ENCODE measurements at regions of chr11 and their contacts with region 1.

Region 1: DNA sequence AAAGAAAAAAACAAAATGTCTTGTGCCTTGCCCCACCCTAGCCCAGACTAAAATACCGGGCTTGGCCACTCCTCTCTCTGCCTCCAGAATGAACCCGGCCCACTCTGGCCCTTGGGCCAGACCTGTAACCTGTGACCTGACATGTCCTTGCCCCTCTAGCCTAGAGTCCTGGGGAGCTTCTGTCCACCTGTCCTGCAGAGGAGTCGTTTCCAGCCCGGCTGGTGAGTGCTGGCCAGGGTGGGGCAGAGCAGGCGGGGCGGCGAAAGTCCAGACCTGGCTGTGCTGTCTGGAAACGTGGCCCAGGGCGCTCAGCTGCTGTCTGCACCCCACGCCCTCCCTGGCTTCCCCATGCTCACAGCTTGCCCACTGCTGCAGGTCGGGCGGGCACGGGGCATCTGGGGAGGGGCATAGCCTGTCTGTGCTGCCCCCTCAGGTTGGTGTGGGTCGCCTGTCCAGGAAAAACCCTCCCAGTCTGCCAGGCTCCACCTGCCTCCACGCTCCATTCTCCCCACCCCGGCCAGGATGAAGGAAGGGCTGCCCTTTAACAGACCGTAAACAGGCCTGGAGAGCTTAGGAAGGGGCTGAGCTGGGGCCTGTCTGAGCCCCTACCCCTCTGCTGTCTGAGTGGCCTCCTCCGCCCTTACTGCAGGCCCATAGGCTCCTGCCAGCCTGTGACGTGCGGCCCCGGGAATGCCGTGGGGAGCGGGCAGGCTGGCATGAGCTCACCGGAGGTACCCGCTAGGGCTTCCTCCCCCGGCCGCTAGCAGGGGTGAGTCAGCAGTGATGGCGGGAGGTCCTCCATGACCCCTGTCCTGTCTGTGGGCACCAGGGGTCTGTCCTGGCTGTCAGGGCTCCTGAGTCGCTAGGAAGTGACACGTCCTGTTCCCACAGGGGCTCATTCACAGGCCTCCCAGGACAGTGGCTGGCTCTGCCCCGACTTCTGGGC is 1.9 kb downstream of the CD151 start:
- DNase-seq: peak; percentile 74 to 88 (median 75)
- H3K4me3 ChIP-seq: peak overlapping the region; percentile 1 to 85 (median 18)
- H3K4me3 Mint-ChIP-seq: peak overlapping the region; percentile 84 to 87
- H3K27ac ChIP-seq: peak overlapping the region in 1 of 2 donors; percentile 71
- H3K27ac Mint-ChIP-seq: peak overlapping the region in 6 of 7 donors; percentile 75 to 95 (median 88)
- H3K4me1 ChIP-seq: peaks cover 50 to 53% of the 10 kb centered on the region in 2 donors
- H3K4me1 Mint-ChIP-seq: peaks cover 46% of the 10 kb centered on the region
- H3K27me3 ChIP-seq: peaks cover 10 to 38% of the 10 kb centered on the region in 2 donors
- H3K27me3 Mint-ChIP-seq: peaks cover 20 to 53% (median 26%) of the 10 kb centered on the region in 3 donors
- CTCF ChIP-seq: no peak

Region 2: GRCh38 chr11:819129-819931 is 15.3 kb before region 1 on chr11:
- intact Hi-C with region 1: loop called in 1 of 2 experiments (anchors 2 kb)
- DNase-seq: peak; percentile 86 to 88 (median 87)
- H3K4me3 ChIP-seq: peak overlapping the region; percentile 71 to 97 (median 87)
- H3K4me3 Mint-ChIP-seq: peak overlapping the region; percentile 88 to 90
- H3K27ac ChIP-seq: peak overlapping the region; percentile 85 to 91
- H3K27ac Mint-ChIP-seq: peak overlapping the region; percentile 91 to 98 (median 97)
- H3K4me1 ChIP-seq: peaks cover 40 to 45% of the 10 kb centered on the region in 2 donors
- H3K4me1 Mint-ChIP-seq: peaks cover 30% of the 10 kb centered on the region
- H3K27me3 ChIP-seq: no peaks in the 10 kb centered on the region
- H3K27me3 Mint-ChIP-seq: peaks cover 0 to 10% (median 2%) of the 10 kb centered on the region in 3 donors
- CTCF ChIP-seq: peak; percentile 34

Region 3: DNA sequence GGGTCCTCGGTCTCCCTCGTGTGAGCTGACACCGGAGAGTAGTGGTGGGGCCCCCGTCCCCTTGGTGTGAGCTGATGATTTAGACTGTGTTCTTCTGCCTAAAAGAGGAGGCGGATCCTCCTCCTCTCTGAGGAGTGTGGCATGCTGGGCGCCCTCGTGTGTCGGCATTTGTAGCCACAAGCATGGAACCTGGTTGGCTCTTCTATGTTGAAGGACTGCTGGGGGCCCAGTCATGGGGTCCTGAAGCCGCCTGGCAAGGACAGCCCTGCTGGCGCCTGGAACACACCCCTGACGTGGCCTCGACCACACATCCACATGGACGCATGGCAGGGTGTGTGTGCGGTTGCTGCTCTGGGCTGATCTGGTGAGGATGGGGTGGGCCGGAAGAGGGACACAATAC is 141.2 kb after region 1 on chr11:
- intact Hi-C with region 1: no loop called
- DNase-seq: no peak
- H3K4me3 ChIP-seq: no peak overlapping the region
- H3K4me3 Mint-ChIP-seq: no peak overlapping the region
- H3K27ac ChIP-seq: no peak overlapping the region
- H3K27ac Mint-ChIP-seq: no peak overlapping the region
- H3K4me1 ChIP-seq: no peaks in the 10 kb centered on the region
- H3K4me1 Mint-ChIP-seq: peaks cover 2% of the 10 kb centered on the region
- H3K27me3 ChIP-seq: no peaks in the 10 kb centered on the region
- H3K27me3 Mint-ChIP-seq: peaks cover 0 to 3% (median 0%) of the 10 kb centered on the region in 3 donors
- CTCF ChIP-seq: no peak

Measured in CD14-positive monocyte (primary cell).